ENCODE measurements at regions of chr15 and their contacts with region 1.

Region 1: DNA sequence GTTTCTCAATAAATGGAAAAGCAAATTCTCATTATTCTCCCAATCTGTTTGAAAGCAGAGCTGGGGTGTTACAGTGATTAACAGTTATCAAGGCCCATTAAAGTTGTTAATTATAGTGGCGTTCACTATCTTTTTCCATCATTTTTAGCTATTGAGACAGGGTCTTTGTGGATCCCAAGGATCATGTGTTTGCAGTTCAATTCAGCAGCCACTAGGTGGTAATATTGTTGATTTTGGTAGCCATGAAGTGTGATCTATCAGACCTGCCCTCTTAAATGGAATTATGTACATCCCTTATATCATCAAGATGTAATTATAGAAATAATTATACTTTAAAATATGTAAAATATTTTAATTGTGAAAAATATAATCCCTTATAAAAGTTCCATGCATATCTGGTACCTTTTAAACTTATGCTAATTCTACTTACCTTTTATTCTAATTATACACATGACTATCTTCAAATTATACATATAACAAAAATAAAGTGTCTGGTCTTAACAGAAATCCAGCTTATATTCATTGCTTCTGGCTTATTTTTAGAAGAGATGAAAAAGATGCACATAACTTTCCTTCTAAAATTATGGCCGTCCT is 126.4 kb downstream of the GREM1 start:
- DNase-seq: peak; percentile 40 to 69
- ATAC-seq: peak in 1 of 2 experiments; percentile 62; a peak in 3 of 6 replicates
- H3K4me3 ChIP-seq: no peak overlapping the region
- H3K27ac ChIP-seq: peak overlapping the region in 1 of 2 experiments; percentile 41; a peak in 1 of 6 replicates
- H3K4me1 ChIP-seq: peaks cover 26% of the 10 kb centered on the region
- CTCF ChIP-seq: peak; percentile 77
- EP300 ChIP-seq: no peak
- POLR2A ChIP-seq: no peak
- RAD21 ChIP-seq: peak; percentile 73 to 78

Region 2: DNA sequence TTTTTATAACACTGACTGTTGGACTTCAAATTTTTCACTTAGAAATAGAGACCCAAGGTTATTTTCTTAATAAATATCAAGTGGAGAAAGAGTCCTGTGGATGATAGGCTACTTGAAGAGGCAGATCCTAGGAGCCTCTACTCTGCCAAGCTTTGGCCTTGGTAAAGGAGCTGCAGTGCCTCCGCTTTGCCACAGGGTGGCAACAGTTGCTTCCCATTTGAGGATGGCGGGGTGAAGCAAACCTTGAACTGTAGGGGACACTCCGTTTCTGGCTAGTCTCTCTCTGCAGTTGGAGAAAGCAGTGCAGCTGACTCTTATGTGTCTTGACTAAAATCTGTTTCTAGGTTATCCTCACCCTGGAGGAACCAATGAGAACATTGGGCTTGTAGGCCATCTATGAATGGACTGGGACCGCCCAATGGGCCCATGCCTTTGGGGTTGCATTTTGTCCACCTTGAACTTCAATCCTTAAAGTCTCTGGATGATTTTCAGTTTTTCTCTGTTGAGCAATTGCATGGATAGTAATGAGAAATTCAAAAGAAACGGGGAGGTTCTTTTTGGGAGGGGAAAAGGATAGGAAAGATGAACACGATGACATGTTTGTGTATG is 192.9 kb before region 1 on chr15:
- CTCF ChIA-PET with region 1: interaction called, 16 read pairs
- POLR2A ChIA-PET with region 1: no interaction called
- DNase-seq: peak; percentile 76 to 80
- ATAC-seq: peak; percentile 92 to 96
- H3K4me3 ChIP-seq: no peak overlapping the region
- H3K27ac ChIP-seq: peak overlapping the region in 1 of 2 experiments; percentile 9; a peak in 2 of 6 replicates
- H3K4me1 ChIP-seq: peaks cover 7% of the 10 kb centered on the region; the same call in 1 of the 3 replicates
- CTCF ChIP-seq: peak; percentile 88
- EP300 ChIP-seq: no peak
- POLR2A ChIP-seq: no peak
- RAD21 ChIP-seq: peak; percentile 88 to 92

Region 3: DNA sequence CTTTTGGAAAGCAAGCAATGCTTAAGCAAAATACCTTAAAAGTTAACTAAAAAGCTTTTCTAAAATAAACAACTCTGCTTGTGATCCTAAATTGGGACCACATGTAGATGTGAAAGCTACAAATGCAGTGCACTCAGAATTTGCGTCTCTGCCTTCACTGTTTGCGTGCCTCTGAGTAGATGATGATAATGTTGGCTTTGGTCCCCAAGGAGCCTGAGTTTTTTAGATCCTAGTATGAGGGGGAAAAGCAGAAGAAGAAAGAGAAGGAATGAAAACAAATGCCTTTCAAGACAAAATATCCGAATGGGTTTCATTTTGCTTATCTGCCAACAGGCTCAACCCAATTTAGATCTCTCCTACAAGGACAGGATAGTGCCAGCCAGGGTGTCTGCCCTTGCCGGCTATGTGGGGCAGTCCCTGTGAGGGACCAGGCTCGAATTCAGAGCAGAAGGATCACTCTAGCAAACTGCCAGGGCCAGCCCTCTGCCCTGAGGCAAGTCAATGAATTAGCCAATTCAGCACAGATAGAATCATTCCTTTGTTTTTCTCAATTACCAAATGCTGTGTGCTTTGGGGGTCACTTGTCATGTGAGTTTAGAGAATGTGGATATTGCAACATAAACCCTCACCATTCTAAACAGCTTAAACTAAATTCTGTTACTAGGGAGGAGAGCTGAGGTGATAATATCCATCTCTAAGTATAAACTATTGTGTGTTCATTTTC is 174.2 kb before region 1 on chr15:
- CTCF ChIA-PET with region 1: interaction called, 41 read pairs
- POLR2A ChIA-PET with region 1: no interaction called
- DNase-seq: no peak
- ATAC-seq: peak in 1 of 2 experiments; percentile 56; a peak in 3 of 6 replicates
- H3K4me3 ChIP-seq: no peak overlapping the region
- H3K27ac ChIP-seq: peak overlapping the region; percentile 4 to 13; a peak in 3 of 6 replicates
- H3K4me1 ChIP-seq: peaks cover 22% of the 10 kb centered on the region; the same call in 2 of the 3 replicates
- CTCF ChIP-seq: no peak
- EP300 ChIP-seq: no peak
- POLR2A ChIP-seq: no peak
- RAD21 ChIP-seq: no peak

Region 4: DNA sequence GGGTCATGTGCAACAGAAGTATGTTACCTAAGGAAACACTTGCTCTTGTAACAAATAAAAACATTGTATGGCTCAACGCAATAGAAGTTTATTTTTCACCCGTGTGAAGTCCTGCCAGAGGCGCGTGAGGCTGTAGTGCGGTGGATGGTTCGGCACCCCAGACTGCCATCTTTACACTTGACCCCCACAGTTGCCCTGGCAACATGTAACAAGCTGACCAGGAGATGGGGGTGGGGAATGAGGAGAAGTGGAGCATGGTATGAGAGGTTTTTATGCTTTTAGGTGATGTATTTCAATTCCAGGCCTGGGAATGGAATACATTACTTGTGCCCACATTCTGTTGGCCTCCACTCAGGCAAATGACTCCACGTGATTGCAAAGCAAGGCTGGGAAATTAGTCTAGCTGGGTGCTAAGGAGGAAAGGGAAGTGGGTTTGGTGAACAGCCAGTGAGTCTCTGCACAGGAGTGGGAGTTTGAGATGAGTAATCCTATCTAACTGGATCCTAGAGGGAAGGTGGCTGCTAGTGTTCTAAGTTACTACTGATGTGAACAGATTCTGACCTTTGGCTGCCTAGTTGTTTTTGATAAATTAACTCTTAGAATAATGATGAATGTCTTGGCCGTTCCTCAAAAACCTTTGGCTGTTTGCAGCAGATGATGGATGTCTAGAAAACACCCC is 160.2 kb before region 1 on chr15:
- CTCF ChIA-PET with region 1: interaction called, 10 read pairs
- POLR2A ChIA-PET with region 1: no interaction called
- DNase-seq: peak in 1 of 2 experiments; percentile 30
- ATAC-seq: peak in 1 of 2 experiments; percentile 23; a peak in 1 of 6 replicates
- H3K4me3 ChIP-seq: no peak overlapping the region
- H3K27ac ChIP-seq: peak overlapping the region; percentile 57 to 61; a peak in 5 of 6 replicates
- H3K4me1 ChIP-seq: peaks cover 54% of the 10 kb centered on the region
- CTCF ChIP-seq: no peak
- EP300 ChIP-seq: no peak
- POLR2A ChIP-seq: no peak
- RAD21 ChIP-seq: no peak

Region 5: DNA sequence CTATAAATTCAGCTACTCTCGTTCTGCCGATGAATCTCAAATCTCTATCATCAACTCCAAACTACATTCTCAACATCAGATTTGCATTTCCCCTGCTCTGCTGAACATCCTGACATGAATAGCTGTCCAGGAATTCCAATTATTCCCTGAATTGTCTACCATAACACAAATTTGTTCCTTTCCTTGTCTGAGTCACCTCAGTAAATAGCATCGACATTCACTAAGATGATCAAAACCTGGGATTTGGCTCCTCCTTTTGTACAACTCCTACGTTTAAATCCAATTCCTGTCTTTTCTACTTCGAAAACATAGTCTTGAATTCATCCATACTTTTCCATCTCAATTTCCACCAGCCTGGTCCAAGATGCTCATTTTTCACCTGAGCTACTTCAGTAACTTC is 19.4 kb before region 1 on chr15:
- CTCF ChIA-PET with region 1: interaction called, 39 read pairs
- POLR2A ChIA-PET with region 1: interaction called, 8 read pairs
- DNase-seq: peak; percentile 80 to 89
- ATAC-seq: peak; percentile 81 to 86
- H3K4me3 ChIP-seq: no peak overlapping the region; the same call in 2 of the 3 replicates
- H3K27ac ChIP-seq: peak overlapping the region; percentile 79 to 86
- H3K4me1 ChIP-seq: peaks cover 70% of the 10 kb centered on the region
- CTCF ChIP-seq: peak; percentile 41
- EP300 ChIP-seq: peak; percentile 80 to 84; a peak in 4 of 5 replicates
- POLR2A ChIP-seq: no peak
- RAD21 ChIP-seq: peak; percentile 72 to 83

Region 6: DNA sequence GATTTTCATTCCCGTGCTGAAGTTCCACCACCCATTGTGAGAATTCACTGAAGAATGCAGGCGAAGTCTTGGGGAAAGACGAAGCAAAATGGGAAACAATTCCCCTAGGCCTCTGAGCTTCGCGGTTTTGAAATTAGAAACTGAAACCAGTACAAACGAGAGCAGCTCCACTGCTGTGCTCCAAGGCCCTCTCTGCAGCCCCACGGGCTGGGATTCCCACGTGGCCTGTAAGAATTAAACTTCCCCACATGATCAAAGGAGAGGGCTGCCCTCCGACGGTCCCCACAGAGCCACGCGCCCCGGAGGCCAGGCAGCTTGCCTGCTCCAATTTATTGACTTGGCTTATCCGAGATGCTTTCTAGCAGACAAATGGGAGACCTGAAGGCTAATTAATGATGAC is 17.5 kb after region 1 on chr15:
- CTCF ChIA-PET with region 1: interaction called, 14 read pairs
- POLR2A ChIA-PET with region 1: interaction called, 3 read pairs
- DNase-seq: no peak
- ATAC-seq: no peak
- H3K4me3 ChIP-seq: no peak overlapping the region
- H3K27ac ChIP-seq: peak overlapping the region; percentile 19 to 54; a peak in 2 of 6 replicates
- H3K4me1 ChIP-seq: peaks cover 41% of the 10 kb centered on the region
- CTCF ChIP-seq: no peak
- EP300 ChIP-seq: no peak
- POLR2A ChIP-seq: no peak
- RAD21 ChIP-seq: no peak

Measured in A549 (cell line).